ENCODE measurements at regions of chr12 and their contacts with region 1.

Region 1: GRCh38 chr12:4763549-4763948 is 43.3 kb downstream of the GALNT8 start:
- DNase-seq: no peak
- H3K4me3 Mint-ChIP-seq: no peak overlapping the region
- H3K27ac Mint-ChIP-seq: no peak overlapping the region
- H3K4me1 Mint-ChIP-seq: no peaks in the 10 kb centered on the region
- H3K27me3 Mint-ChIP-seq: peaks cover 5% of the 10 kb centered on the region

Region 2: GRCh38 chr12:4579305-4580102 is 184.0 kb before region 1 on chr12:
- intact Hi-C with region 1: loop called (anchors 2 kb)
- DNase-seq: no peak
- H3K4me3 Mint-ChIP-seq: no peak overlapping the region
- H3K27ac Mint-ChIP-seq: no peak overlapping the region
- H3K4me1 Mint-ChIP-seq: no peaks in the 10 kb centered on the region
- H3K27me3 Mint-ChIP-seq: peaks cover 9% of the 10 kb centered on the region

Region 3: DNA sequence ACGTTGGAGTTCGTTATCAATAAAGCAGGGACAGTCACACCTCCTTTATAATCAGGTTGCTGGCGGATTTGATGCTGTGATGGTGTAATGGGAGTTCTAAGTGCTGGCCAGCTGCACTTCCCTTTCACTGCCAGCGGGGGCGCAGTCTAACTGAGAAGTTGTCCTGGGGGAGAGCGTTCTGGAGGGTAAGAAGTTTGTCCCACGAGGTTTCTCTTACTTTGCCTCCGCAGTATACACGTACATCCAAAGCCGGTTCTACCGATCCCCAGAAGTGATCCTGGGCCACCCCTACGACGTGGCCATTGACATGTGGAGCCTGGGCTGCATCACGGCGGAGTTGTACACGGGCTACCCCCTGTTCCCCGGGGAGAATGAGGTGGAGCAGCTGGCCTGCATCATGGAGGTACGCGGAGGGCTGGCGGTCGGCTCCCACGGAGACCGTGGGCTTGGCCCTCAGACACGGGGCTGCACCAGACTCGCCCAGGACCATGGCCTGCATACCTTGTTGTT is 158.8 kb before region 1 on chr12:
- intact Hi-C with region 1: loop called (anchors 10 kb)
- DNase-seq: peak; percentile 94
- H3K4me3 Mint-ChIP-seq: peak overlapping the region; percentile 91
- H3K27ac Mint-ChIP-seq: peak overlapping the region; percentile 91
- H3K4me1 Mint-ChIP-seq: peaks cover 7% of the 10 kb centered on the region
- H3K27me3 Mint-ChIP-seq: peaks cover 19% of the 10 kb centered on the region